OCI-LY7 (cell line): ENCODE measurements at regions of chr5 and their contacts with region 1.

Region 1: GRCh38 chr5:124748687-124749594 is 2.5 kb upstream of the ZNF608 start:
- DNase-seq: peak; percentile 96
- H3K4me3 ChIP-seq: peak overlapping the region; percentile 85
- H3K27ac ChIP-seq: peak overlapping the region; percentile 97
- H3K4me1 ChIP-seq: peaks cover 21% of the 10 kb centered on the region
- CTCF ChIP-seq: peak; percentile 33; the same call in 1 of the 2 replicates

Region 2: GRCh38 chr5:123671042-123671441 is 1077.9 kb before region 1 on chr5:
- CTCF ChIA-PET with region 1: no interaction called
- POLR2A ChIA-PET with region 1: no interaction called
- intact Hi-C with region 1: loop called (anchors 10 kb)
- DNase-seq: peak; percentile 65
- H3K4me3 ChIP-seq: no peak overlapping the region
- H3K27ac ChIP-seq: no peak overlapping the region
- H3K4me1 ChIP-seq: peaks cover 3% of the 10 kb centered on the region
- CTCF ChIP-seq: peak; percentile 92

Region 3: GRCh38 chr5:124263680-124264483 is 485.1 kb before region 1 on chr5:
- CTCF ChIA-PET with region 1: no interaction called
- POLR2A ChIA-PET with region 1: no interaction called
- intact Hi-C with region 1: no loop called
- DNase-seq: no peak
- H3K4me3 ChIP-seq: no peak overlapping the region
- H3K27ac ChIP-seq: no peak overlapping the region
- H3K4me1 ChIP-seq: no peaks in the 10 kb centered on the region
- CTCF ChIP-seq: no peak

Region 4: DNA sequence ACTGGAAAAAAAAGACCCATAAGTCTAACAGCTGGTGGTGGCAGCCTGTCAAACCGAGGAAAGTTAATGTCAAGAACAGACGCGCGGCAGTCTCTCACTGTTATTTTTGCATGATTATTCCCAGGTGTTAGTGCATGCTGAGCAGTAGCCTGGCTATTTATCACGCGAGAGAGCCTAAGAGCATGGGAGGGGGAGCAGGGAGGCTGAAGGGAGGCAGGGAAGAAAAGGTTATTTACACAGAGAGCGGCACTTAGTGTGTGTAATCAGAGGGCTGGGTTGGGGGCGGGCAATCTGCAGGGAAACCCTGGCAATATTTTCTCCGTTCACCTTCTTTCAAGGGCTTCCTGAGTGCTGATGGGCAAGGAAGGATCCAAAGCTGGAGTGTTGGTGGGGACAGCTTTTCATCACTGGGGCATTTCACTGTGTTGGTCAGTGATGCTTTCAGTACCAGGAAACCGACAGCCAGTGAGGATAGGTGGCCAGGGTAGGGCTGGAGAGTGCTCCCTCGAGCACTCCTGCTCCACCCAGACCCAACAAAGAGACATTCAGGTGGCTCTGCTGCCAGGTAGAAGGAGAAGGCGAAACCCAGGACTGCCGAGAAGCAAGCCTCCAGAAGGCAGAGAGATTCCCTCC is 42.1 kb before region 1 on chr5:
- CTCF ChIA-PET with region 1: interaction called, 3 read pairs
- POLR2A ChIA-PET with region 1: interaction called, 84 read pairs
- intact Hi-C with region 1: no loop called
- DNase-seq: peak; percentile 53
- H3K4me3 ChIP-seq: peak overlapping the region; percentile 66
- H3K27ac ChIP-seq: peak overlapping the region; percentile 95
- H3K4me1 ChIP-seq: peaks cover 95% of the 10 kb centered on the region
- CTCF ChIP-seq: no peak

Region 5: DNA sequence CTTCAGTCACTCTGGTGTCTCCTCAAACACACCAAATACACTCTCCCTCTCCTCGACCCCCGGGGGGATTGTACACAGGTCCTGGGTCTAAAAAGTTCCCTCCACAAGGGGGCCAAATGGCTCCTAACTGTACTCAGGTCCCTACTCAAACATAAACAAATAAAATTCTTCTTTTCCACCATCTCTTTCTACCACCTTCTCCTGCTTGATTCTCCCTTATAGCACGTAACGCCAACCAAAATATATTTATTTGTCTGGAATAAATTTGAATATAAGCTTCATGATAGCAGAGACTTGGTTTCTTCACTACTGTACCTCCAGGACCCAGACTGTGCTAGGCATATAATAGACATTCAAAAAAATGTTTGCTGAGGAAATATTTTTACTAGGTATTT is 23.9 kb before region 1 on chr5:
- CTCF ChIA-PET with region 1: interaction called, 3 read pairs
- POLR2A ChIA-PET with region 1: interaction called, 42 read pairs
- intact Hi-C with region 1: no loop called
- DNase-seq: peak; percentile 83
- H3K4me3 ChIP-seq: peak overlapping the region; percentile 71
- H3K27ac ChIP-seq: peak overlapping the region; percentile 65
- H3K4me1 ChIP-seq: peaks cover 86% of the 10 kb centered on the region
- CTCF ChIP-seq: peak; percentile 85

Region 6: GRCh38 chr5:124764992-124765611 is 16.2 kb after region 1 on chr5:
- CTCF ChIA-PET with region 1: no interaction called
- POLR2A ChIA-PET with region 1: interaction called, 12 read pairs
- intact Hi-C with region 1: no loop called
- DNase-seq: no peak
- H3K4me3 ChIP-seq: no peak overlapping the region
- H3K27ac ChIP-seq: no peak overlapping the region
- H3K4me1 ChIP-seq: peaks cover 5% of the 10 kb centered on the region
- CTCF ChIP-seq: no peak

Region 7: GRCh38 chr5:124920909-124921666 is 172.1 kb after region 1 on chr5:
- CTCF ChIA-PET with region 1: interaction called, 3 read pairs
- POLR2A ChIA-PET with region 1: interaction called, 30 read pairs
- intact Hi-C with region 1: loop called (anchors 2 kb)
- DNase-seq: peak; percentile 90
- H3K4me3 ChIP-seq: peak overlapping the region; percentile 62
- H3K27ac ChIP-seq: peak overlapping the region; percentile 88
- H3K4me1 ChIP-seq: peaks cover 66% of the 10 kb centered on the region
- CTCF ChIP-seq: peak; percentile 36; the same call in 1 of the 2 replicates

Region 8: DNA sequence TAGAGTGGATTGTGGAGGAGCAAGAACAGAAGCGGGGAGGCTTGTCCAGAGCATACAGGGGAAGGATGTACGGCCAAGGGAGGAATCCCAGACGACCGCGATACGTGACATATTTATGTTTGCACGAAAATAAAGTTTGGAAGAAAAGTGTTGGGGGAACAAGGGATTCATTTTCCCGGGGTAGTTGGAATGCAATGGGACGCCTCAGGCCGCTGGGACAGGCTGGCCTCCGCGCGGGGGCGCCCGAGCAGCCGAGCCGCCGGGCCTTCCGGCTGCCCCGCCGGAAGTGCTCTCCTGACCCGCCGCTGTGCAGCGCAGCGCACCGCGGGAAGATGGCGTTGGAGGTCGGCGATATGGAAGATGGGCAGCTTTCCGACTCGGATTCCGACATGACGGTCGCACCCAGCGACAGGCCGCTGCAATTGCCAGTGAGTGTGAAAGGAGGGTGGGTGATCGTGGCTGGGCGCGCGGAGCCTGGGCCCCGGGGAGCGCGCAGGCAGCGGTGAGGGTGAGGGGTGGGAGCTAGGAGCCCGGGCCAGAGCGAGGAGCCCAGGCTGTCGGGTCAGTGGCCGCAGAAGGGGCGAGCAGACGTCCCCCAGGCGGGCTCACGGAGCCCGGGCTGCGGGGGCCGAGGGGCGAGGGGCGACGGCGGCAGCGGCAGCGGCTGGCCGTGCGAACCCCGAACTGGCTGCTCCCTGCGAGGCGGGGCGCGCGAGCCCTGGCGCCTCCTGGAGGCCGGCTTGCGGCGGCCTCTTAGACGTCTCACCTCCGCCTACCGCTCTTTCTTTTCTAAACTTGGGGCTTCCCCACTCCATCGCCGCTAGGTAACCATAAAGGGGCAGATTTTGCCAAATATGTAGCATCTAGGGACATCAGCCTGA is 1851.9 kb after region 1 on chr5 and contains the start of gene PHAX:
- CTCF ChIA-PET with region 1: no interaction called
- POLR2A ChIA-PET with region 1: interaction called, 3 read pairs
- intact Hi-C with region 1: loop called (anchors 10 kb)
- DNase-seq: peak; percentile 90
- H3K4me3 ChIP-seq: peak within 1 kb of the TSS; percentile 86
- H3K27ac ChIP-seq: peak within 1 kb of the TSS; percentile 97
- H3K4me1 ChIP-seq: peaks cover 36% of the 10 kb centered on the region
- CTCF ChIP-seq: peak; percentile 82
- total RNA-seq, gene PHAX: 73.8 and 89.7 TPM in 2 replicates